ENCODE measurements at regions of chr3 and their contacts with region 1.

Region 1: DNA sequence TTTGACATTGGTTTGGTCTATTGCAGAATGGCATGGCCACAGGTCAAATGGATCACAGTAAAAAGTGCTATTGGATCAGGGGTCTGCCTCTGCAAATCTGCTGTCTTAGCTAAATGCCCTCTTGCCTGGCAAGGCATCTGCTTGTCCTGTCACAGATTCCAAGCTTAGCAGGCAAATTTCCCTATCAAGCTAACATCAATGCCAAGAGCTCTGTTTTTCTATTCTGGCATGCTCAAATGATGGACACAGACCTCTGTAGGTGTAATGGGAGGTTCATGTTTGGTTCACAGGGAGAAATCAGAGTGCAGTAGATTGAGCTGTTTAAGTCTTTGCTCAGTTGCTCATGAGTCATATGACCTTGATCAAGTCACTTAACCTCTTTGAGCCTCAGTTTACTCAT is 54.8 kb upstream of the CPB1 start:
- DNase-seq: no peak
- H3K4me3 ChIP-seq: no peak overlapping the region
- CTCF ChIP-seq: no peak
- POLR2A ChIP-seq: no peak

Region 2: GRCh38 chr3:148255981-148256969 is 516.6 kb before region 1 on chr3:
- intact Hi-C with region 1: no loop called
- DNase-seq: no peak
- H3K4me3 ChIP-seq: no peak overlapping the region
- CTCF ChIP-seq: no peak
- POLR2A ChIP-seq: no peak

Region 3: GRCh38 chr3:148739720-148740119 is 33.1 kb before region 1 on chr3:
- intact Hi-C with region 1: loop called (anchors 2 kb)
- DNase-seq: no peak
- H3K4me3 ChIP-seq: no peak overlapping the region
- CTCF ChIP-seq: no peak
- POLR2A ChIP-seq: no peak

Measured in lower leg skin (tissue), 4 donors.